ENCODE measurements at regions of chr15 and their contacts with region 1.

Region 1: GRCh38 chr15:89206908-89207331 is 14.5 kb downstream of the RLBP1 start:
- DNase-seq: peak; percentile 76
- ATAC-seq: peak; percentile 98
- H3K4me3 ChIP-seq: peak overlapping the region; percentile 70
- H3K27ac ChIP-seq: no peak overlapping the region
- H3K4me1 ChIP-seq: no peaks in the 10 kb centered on the region
- H3K27me3 ChIP-seq: no peaks in the 10 kb centered on the region
- CTCF ChIP-seq: peak; percentile 95

Region 2: GRCh38 chr15:88139936-88140335 is 1067.0 kb before region 1 on chr15:
- CTCF ChIA-PET with region 1: no interaction called
- POLR2A ChIA-PET with region 1: no interaction called
- intact Hi-C with region 1: no loop called
- DNase-seq: no peak
- ATAC-seq: no peak
- H3K4me3 ChIP-seq: no peak overlapping the region
- H3K27ac ChIP-seq: no peak overlapping the region
- H3K4me1 ChIP-seq: no peaks in the 10 kb centered on the region
- H3K27me3 ChIP-seq: no peaks in the 10 kb centered on the region
- CTCF ChIP-seq: no peak

Region 3: DNA sequence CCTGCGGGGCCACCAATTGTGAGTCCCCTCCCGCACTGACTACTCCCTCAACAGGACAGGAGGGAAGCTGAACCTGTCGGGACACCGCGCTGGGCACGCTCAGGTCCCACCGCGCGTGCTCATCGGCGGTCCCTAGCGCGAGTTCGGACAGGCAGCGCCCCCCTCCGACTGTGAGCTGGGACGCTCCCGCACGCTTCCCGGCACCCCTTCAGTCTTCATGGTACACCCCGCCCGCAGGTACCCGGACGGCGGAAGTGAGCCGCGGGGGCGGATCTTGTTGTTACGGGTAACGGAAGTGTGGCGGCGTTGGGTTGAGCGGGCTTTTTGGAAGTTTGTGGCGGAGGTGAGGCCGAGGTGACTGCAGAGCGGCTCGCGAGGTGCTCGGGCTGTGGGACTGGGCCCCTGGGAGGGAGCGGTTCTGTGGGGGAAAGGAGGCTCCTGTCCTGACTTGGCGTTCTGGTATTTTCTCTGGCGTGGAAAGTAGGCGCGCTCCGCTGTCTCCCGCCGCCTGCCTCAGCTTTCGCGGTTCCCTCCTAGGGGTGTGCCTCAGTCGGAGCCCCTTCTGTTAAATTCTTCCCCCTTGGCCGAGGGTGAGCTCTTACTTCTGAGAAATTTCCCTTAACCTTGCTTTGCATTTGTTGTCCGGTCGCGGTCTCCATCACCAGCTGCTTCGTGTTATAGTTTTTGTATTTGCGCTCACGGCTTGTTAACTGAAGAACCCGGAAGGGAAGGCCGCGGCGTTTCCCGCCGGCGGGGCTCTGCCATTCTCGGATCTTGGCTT is 37.0 kb after region 1 on chr15 and contains the start of gene FANCI:
- CTCF ChIA-PET with region 1: interaction called, 4 read pairs
- POLR2A ChIA-PET with region 1: no interaction called
- intact Hi-C with region 1: loop called (anchors 2 kb)
- DNase-seq: peak; percentile 95
- ATAC-seq: peak; percentile 93
- H3K4me3 ChIP-seq: peak within 1 kb of the TSS; percentile 91
- H3K27ac ChIP-seq: peak within 1 kb of the TSS; percentile 32
- H3K4me1 ChIP-seq: peaks cover 17% of the 10 kb centered on the region
- H3K27me3 ChIP-seq: no peaks in the 10 kb centered on the region
- CTCF ChIP-seq: peak; percentile 72
- total RNA-seq, gene FANCI: 38.4 and 49.5 TPM in 2 replicates

Region 4: GRCh38 chr15:89299896-89300295 is 93.0 kb after region 1 on chr15:
- CTCF ChIA-PET with region 1: interaction called, 24 read pairs
- POLR2A ChIA-PET with region 1: no interaction called
- intact Hi-C with region 1: loop called (anchors 1 kb)
- DNase-seq: peak; percentile 23
- ATAC-seq: peak; percentile 71; the same call in 1 of the 2 replicates
- H3K4me3 ChIP-seq: no peak overlapping the region
- H3K27ac ChIP-seq: no peak overlapping the region
- H3K4me1 ChIP-seq: no peaks in the 10 kb centered on the region
- H3K27me3 ChIP-seq: no peaks in the 10 kb centered on the region
- CTCF ChIP-seq: peak; percentile 42

Measured in PC-3 (cell line).